ENCODE measurements at regions of chr11 and their contacts with region 1.

Region 1: DNA sequence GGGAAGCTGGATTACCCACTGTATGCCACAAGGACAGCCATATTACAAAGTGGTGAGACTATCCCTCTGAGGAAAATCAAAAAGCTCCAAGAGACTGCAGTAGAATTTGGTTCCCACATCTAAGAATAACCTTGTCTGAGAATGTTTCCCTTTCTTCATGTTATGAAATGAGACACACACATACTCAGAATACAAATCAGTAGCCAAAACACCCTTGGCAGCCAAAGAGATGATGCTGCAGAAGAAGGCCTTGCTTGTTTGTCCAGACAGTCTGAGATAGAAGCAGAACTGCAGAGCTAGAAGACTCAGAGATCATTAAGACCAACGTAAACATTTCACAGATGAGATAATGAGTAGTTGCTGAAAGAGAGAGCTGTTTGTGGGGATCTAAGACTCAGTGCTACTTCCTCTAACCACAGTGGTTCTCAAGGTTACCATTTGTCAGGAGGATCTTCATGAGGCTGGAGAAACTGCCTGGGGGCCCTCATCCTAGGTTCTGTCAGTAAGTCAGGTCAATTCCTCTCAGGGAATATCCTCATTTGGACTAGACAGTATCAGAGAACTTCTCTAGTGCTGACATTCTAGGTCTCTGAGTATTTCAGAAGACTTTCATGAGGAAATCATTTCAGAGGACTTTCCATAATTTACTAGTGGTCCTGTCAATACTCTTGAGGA is 38.9 kb downstream of the RELT start:
- DNase-seq: no peak

Region 2: DNA sequence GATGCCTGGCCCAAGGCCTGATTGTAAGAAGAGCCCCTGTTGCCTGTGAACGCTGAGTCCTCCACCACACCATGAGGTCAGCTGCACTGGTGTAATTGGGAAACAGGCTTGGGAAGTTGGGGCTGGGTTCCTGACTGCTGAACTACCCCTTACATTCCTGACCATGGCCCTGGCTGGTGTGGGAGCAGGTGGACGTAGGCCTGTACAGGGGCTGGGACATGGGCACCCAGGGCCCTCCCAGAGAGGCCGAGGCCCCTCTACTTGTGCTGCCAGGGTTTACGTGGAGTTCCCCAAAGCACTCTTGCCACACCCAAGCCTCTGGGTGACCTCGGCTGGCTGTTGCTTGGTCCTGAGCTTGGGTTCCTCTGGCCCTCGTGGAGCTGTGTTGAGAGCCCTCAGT is 33.5 kb before region 1 on chr11:
- intact Hi-C with region 1: loop called in 1 of 2 experiments (anchors 1 kb)
- DNase-seq: no peak

Region 3: DNA sequence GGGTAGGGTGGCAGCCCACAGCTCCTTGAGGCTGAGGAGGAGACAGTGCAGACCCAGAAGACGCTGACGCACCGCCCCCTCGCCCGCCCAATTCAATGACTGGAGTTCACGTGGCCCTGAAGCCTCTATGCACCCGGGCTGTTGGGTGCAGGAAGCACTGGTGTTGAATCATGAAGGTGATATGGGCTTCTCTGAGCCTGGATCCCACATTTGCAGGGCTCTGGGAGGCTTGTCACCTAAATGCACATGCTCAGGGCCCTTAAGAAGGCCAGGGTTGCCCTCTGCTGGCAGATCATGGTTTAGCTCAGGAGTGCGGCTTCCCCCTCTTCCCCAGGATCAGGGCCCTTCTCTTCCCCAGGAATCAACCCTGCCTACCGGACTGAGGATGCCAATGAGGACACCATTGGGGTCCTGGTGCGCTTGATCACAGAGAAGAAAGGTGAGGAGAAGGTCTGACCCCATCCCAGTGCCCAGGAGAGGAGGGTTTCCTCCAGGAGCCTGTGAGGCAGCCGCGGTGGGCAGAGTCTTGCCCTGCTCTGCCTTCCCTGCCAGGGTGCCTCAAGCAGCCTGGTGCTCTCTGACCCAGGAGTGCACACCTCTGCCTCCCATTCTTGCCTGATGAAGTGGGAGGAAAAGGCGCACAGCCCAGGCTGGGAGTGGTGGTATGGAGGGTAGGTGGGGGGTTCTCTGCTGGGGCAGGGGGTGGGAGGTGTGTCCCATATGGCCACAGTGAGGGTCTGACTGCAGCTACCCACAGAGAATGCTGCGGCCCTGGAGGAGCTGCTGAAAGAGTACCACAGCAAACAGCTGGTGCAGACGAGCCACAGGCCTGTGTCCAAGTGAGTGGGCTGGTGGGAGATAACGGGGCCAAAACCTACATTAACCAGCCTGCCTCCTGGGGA is 21.4 kb before region 1 on chr11:
- intact Hi-C with region 1: loop called in 1 of 2 experiments (anchors 1 kb)
- DNase-seq: peak; percentile 91

Region 4: GRCh38 chr11:73652046-73652730 is 237.1 kb after region 1 on chr11:
- intact Hi-C with region 1: loop called in 1 of 2 experiments (anchors 10 kb)
- DNase-seq: no peak